ENCODE measurements at regions of chr2 and their contacts with region 1.

Region 1: GRCh38 chr2:134142885-134143284 is 111.0 kb upstream of the MGAT5 start:
- DNase-seq: peak; percentile 37
- H3K4me3 ChIP-seq: no peak overlapping the region
- H3K27ac ChIP-seq: peak overlapping the region; percentile 46
- H3K4me1 ChIP-seq: peaks cover 30% of the 10 kb centered on the region
- H3K27me3 ChIP-seq: no peaks in the 10 kb centered on the region
- CTCF ChIP-seq: no peak
- POLR2A ChIP-seq: no peak

Region 2: GRCh38 chr2:134161170-134161547 is 18.3 kb after region 1 on chr2:
- CTCF ChIA-PET with region 1: interaction called, 3 read pairs
- POLR2A ChIA-PET with region 1: no interaction called
- dilution Hi-C with region 1: no loop called
- intact Hi-C with region 1: loop called (anchors 1 kb)
- DNase-seq: peak; percentile 77
- H3K4me3 ChIP-seq: no peak overlapping the region
- H3K27ac ChIP-seq: peak overlapping the region; percentile 90
- H3K4me1 ChIP-seq: peaks cover 19% of the 10 kb centered on the region
- H3K27me3 ChIP-seq: no peaks in the 10 kb centered on the region
- CTCF ChIP-seq: no peak
- POLR2A ChIP-seq: peak; percentile 39

Region 3: GRCh38 chr2:134183679-134184078 is 40.8 kb after region 1 on chr2:
- CTCF ChIA-PET with region 1: no interaction called
- POLR2A ChIA-PET with region 1: no interaction called
- dilution Hi-C with region 1: no loop called
- intact Hi-C with region 1: no loop called
- DNase-seq: no peak
- H3K4me3 ChIP-seq: no peak overlapping the region
- H3K27ac ChIP-seq: no peak overlapping the region
- H3K4me1 ChIP-seq: no peaks in the 10 kb centered on the region
- H3K27me3 ChIP-seq: no peaks in the 10 kb centered on the region
- CTCF ChIP-seq: no peak
- POLR2A ChIP-seq: no peak

Region 4: GRCh38 chr2:134564549-134564948 is 421.7 kb after region 1 on chr2:
- CTCF ChIA-PET with region 1: no interaction called
- POLR2A ChIA-PET with region 1: no interaction called
- dilution Hi-C with region 1: no loop called
- intact Hi-C with region 1: no loop called
- DNase-seq: no peak
- H3K4me3 ChIP-seq: no peak overlapping the region
- H3K27ac ChIP-seq: no peak overlapping the region
- H3K4me1 ChIP-seq: no peaks in the 10 kb centered on the region
- H3K27me3 ChIP-seq: no peaks in the 10 kb centered on the region
- CTCF ChIP-seq: no peak
- POLR2A ChIP-seq: no peak